Activated CD4-positive, alpha-beta memory T cell treated with anti-CD3 and anti-CD28 coated beads for 36 hours (primary cell): ENCODE measurements at regions of chr11 and their contacts with region 1.

Region 1: DNA sequence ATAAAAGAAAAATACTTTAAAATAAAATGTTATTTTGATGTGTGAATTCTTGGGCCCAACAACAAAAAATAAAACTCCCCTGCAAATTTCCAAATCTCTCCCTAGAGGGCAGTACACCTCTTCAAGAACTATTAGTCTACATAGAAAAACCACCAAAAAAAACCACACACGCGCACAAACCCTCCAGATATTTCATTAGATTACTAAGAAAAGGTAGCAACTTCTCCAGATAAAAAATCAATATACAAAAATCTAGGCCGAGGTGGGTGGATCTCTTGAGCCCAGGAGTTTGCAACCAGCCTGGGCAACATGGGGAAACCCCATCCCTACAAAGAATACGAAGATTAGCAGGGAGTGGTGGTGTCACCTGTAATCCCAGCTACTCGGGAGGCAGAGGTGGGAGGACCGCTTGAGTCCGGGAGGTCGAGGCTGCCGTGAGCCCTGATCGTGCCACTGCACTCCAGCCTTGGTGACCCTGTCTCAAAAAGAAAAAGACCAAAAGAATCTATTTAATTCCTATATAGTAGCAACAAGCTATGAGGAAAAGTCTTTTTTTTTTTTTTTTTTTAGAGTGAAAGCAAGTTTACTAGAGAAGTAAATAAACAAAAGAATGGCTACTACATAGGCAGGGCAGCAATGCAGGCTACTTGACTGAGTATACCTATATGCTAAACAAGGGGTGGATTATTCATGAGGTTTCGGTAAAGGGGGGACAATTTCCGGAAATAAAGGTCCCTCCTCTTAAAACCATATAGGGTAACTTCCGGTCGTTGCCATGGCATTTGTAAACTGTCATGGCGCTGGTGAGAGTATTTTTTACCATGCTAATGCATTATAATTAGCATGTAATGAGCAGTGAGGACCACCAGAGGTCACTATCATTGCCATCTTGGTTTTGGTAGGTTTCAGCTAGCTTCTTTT is 13.1 kb downstream of the B3GNT6 start:
- DNase-seq: peak; percentile 81
- H3K4me3 Mint-ChIP-seq: peak overlapping the region; percentile 62
- H3K27ac Mint-ChIP-seq: peak overlapping the region; percentile 51
- H3K4me1 Mint-ChIP-seq: peaks cover 13% of the 10 kb centered on the region
- H3K27me3 Mint-ChIP-seq: peaks cover 6% of the 10 kb centered on the region

Region 2: DNA sequence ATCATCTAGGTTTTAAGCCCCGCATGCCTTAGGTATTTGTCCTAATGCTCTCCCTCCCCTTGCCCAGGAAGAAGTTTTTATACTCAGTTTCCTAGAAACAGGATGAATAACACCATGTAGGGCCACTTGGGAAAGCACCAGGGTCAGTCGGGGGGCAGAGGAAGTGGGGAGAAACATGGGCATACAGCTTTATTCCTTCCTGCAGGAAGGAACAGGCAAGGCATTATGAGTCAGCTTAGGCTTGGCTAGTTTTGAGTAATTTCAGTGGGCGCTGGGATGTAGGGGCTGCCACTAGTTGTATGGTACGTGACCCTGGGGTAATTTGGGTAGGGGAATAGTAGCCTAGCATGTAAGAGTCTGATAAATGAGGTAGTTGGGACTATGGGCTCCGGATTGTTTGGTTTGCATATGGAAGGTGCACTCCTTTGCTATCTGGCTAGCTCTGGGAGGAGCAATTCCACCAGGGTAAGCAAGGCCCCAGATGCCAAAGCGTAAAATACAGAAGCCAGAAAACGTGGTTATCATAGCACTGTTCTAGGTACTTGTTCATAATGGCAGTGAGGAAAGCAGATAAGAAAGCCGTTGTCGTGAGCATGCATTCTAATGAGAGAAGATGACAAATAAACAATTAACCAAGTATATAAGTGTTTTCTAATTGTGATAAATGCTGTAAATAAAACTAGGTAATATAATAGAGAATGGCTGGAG is 161.7 kb before region 1 on chr11:
- CTCF ChIA-PET with region 1: no interaction called
- POLR2A ChIA-PET with region 1: no interaction called
- intact Hi-C with region 1: no loop called
- DNase-seq: peak; percentile 28
- H3K4me3 Mint-ChIP-seq: no peak overlapping the region
- H3K27ac Mint-ChIP-seq: no peak overlapping the region
- H3K4me1 Mint-ChIP-seq: peaks cover 10% of the 10 kb centered on the region
- H3K27me3 Mint-ChIP-seq: no peaks in the 10 kb centered on the region

Region 3: GRCh38 chr11:76984747-76985146 is 62.5 kb before region 1 on chr11:
- CTCF ChIA-PET with region 1: no interaction called
- POLR2A ChIA-PET with region 1: no interaction called
- intact Hi-C with region 1: no loop called
- DNase-seq: no peak
- H3K4me3 Mint-ChIP-seq: no peak overlapping the region
- H3K27ac Mint-ChIP-seq: no peak overlapping the region
- H3K4me1 Mint-ChIP-seq: no peaks in the 10 kb centered on the region
- H3K27me3 Mint-ChIP-seq: no peaks in the 10 kb centered on the region

Region 4: DNA sequence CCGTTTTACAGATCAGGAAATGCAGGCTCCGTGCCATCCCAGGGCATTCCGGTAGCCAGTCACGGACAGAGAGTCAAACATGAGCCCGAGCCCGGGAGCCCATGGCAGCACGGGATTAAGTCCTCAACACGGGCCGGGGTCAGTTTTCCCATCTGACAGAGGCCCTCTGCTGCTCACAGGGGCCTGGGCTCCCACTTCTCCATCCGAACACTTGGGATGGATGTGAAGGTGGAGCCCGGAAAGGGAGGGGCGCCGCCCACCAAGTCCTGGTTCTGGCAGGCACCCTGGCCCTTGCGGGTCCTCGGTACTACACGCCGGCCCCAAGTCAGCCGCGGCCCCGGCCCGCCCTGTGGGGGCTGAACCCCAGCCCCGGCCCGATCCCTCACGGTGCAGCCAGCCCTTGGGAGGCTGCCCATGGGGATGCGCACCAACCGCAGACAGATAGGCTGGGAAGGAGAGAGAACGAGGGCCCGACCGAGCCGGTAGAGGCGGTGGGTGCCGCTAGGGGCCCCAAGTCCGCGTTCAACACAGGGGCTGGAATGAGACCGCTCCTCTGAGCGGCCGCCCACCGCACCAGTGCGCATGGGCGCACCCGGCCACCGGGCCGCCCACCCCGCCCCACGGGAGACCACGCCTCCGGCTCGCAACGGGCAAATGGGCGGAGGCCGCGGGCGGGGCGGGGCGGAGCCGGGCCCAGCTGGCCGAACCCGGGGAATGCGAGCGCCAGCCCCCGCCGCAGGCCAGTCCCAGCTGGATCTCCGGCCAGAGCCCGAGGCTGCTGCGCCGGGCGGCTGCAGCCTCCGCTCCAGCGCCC is 19.2 kb after region 1 on chr11 and contains the start of gene CAPN5:
- CTCF ChIA-PET with region 1: interaction called, 13 read pairs
- POLR2A ChIA-PET with region 1: no interaction called
- intact Hi-C with region 1: loop called (anchors 1 kb)
- DNase-seq: peak; percentile 88
- H3K4me3 Mint-ChIP-seq: peak within 1 kb of the TSS; percentile 71
- H3K27ac Mint-ChIP-seq: no peak within 1 kb of the TSS
- H3K4me1 Mint-ChIP-seq: peaks cover 4% of the 10 kb centered on the region
- H3K27me3 Mint-ChIP-seq: no peaks in the 10 kb centered on the region
- total RNA-seq, gene CAPN5: 0.88 to 1.1 TPM